Left colon (tissue), 2 donors: ENCODE measurements at regions of chr3 and their contacts with region 1.

Region 1: DNA sequence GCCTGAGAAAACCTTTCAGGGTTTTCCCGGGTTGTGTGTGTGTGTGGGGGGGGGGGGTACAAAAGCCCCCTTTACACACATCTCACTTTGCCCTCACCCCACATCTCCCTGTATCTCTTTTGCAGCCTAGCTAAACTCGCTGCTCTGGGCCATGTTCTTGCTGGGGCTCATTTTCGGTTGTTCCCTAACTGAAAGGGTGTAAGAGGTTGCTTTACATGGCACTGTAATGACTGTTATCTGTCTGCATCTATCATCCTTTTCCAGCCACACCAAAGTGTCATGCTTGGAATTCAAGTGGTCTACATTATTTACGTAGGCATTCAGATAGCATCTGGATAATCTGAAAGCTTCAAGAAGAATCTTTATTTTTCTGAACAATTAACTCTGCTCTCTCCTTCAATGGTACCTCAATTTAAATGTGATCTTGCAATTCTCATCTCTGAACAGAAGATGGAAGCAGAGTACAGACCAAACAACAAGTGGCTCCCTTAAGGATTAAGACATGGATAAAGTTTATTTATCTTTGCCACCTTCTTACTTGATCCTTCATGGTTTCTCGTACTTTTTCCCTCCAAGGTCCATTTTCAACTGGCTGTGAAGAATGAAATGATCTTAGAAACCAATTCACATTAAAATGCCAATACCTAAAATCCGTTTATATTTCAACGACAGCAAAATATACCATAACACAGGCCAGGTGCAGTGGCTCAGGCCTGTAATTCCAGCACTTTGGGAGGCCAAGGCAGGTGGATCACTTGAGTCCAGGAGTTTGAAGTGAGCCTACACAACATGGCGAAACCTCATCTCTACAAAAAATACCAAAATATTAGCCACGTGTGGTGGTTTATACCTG is 34.9 kb downstream of the DCLK3 start:
- DNase-seq: no peak
- ATAC-seq: peak; percentile 66

Region 2: DNA sequence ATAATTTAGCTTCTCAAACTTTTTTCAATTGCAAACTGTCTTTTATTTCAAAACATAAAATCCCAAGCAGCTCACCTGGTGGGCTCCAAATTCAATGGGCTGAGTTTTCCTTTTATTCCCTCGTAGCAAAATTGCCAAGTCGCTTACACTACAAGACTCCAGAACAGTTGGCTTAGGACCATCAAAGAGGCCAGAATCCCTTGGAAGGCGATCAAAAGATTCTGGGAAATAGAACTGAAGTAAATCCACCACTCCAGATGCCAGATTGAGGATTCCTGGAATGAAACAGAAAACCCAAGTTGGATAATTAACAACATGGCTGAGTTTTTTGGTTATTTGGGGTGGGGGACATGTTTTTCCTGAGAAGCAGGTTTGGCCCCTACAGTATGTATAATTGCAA is 122.6 kb after region 1 on chr3:
- intact Hi-C with region 1: loop called in 1 of 2 experiments (anchors 5 kb)
- DNase-seq: no peak
- ATAC-seq: no peak

Region 3: GRCh38 chr3:36871379-36872126 is 142.1 kb after region 1 on chr3:
- intact Hi-C with region 1: loop called in 1 of 2 experiments (anchors 5 kb)
- DNase-seq: no peak
- ATAC-seq: no peak

Region 4: GRCh38 chr3:36957862-36958686 is 228.6 kb after region 1 on chr3:
- intact Hi-C with region 1: loop called in 1 of 2 experiments (anchors 10 kb)
- DNase-seq: no peak
- ATAC-seq: peak; percentile 63

Region 5: DNA sequence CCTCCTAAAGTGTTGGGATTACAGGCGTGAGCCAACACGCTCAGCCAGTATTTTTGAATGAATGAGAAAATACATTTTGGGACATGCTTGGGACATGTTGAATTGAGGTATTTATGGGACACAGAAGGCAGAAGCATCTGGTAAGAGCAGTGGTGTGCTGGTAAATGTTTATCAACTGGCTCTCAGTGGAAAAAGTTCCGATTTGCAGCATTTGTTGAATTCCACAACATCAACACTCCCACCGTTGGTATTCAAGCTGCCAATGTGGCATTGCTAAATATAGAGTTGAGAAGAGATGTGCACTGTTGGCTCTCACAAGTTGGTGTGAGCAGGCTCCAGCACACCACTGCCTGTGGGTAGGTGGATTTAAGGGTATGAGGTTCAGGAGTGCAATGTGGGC is 480.8 kb after region 1 on chr3:
- intact Hi-C with region 1: loop called in 1 of 2 experiments (anchors 10 kb)
- DNase-seq: no peak
- ATAC-seq: no peak